ENCODE measurements at regions of chr9 and their contacts with region 1.

Region 1: DNA sequence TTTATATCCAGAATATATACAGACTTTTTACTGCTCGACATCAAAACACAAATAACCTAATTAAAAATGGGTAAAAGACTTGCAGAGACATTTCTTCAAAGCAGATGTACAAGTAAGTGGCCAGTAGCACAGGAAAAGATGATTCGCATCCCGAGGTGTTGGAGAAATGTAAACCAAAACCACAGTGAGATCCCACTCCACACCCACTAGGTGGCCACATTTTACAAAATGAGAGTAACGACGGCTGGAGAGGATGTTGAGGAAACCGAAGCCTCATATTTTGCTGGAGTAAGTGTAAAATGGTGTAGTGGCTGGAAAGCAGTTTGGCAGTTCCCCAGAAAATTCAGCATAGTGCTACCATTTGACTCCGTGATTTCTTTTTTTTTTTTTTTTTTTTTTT is 21.2 kb upstream of the GBGT1 start:
- DNase-seq: peak; percentile 77
- H3K4me3 ChIP-seq: peak overlapping the region in 1 of 2 experiments; percentile 25; a peak in 1 of 4 replicates
- H3K27ac ChIP-seq: no peak overlapping the region
- H3K4me1 ChIP-seq: no peaks in the 10 kb centered on the region
- H3K27me3 ChIP-seq: peaks cover 44% of the 10 kb centered on the region
- CTCF ChIP-seq: peak; percentile 63
- EP300 ChIP-seq: no peak
- RAD21 ChIP-seq: peak; percentile 84

Region 2: GRCh38 chr9:133119482-133120351 is 65.2 kb before region 1 on chr9:
- CTCF ChIA-PET with region 1: no interaction called
- POLR2A ChIA-PET with region 1: no interaction called
- DNase-seq: peak; percentile 90
- H3K4me3 ChIP-seq: peak overlapping the region; percentile 23 to 71; a peak in 3 of 4 replicates
- H3K27ac ChIP-seq: peak overlapping the region; percentile 32 to 99; a peak in 3 of 4 replicates
- H3K4me1 ChIP-seq: peaks cover 14 to 74% of the 10 kb centered on the region in 2 experiments
- H3K27me3 ChIP-seq: no peaks in the 10 kb centered on the region
- CTCF ChIP-seq: no peak
- EP300 ChIP-seq: peak in 1 of 2 experiments; percentile 43; a peak in 2 of 4 replicates
- RAD21 ChIP-seq: no peak

Region 3: DNA sequence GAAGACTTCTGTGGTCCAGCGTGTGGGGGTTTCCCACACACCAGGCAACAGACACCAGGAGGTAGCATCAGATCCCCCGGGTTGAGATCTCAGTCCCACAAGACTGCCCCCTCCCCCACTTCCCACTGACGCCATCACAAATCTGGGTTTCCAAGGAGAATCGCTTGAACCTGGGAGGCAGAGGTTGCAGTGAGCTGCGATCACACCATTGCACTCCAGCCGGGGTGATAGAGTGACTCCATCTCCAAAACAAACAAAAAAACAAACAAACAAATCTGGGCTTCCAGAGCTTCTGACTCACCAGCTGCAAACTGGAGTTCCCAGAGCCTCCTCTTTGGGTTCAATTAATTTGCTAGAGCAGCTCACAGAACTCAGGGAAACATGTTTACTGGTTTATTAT is 16.5 kb before region 1 on chr9:
- CTCF ChIA-PET with region 1: interaction called, 18 read pairs
- POLR2A ChIA-PET with region 1: no interaction called
- DNase-seq: no peak
- H3K4me3 ChIP-seq: no peak overlapping the region
- H3K27ac ChIP-seq: no peak overlapping the region
- H3K4me1 ChIP-seq: peaks cover 0 to 5% of the 10 kb centered on the region in 2 experiments; a peak in 1 of 4 replicates
- H3K27me3 ChIP-seq: peaks cover 4% of the 10 kb centered on the region; the same call in 1 of the 2 replicates
- CTCF ChIP-seq: no peak
- EP300 ChIP-seq: no peak
- RAD21 ChIP-seq: no peak

Region 4: GRCh38 chr9:133327834-133328484 is 143.0 kb after region 1 on chr9:
- CTCF ChIA-PET with region 1: interaction called, 47 read pairs
- POLR2A ChIA-PET with region 1: interaction called, 6 read pairs
- DNase-seq: no peak
- H3K4me3 ChIP-seq: no peak overlapping the region
- H3K27ac ChIP-seq: no peak overlapping the region
- H3K4me1 ChIP-seq: no peaks in the 10 kb centered on the region
- H3K27me3 ChIP-seq: no peaks in the 10 kb centered on the region
- CTCF ChIP-seq: no peak
- EP300 ChIP-seq: no peak
- RAD21 ChIP-seq: no peak

Region 5: DNA sequence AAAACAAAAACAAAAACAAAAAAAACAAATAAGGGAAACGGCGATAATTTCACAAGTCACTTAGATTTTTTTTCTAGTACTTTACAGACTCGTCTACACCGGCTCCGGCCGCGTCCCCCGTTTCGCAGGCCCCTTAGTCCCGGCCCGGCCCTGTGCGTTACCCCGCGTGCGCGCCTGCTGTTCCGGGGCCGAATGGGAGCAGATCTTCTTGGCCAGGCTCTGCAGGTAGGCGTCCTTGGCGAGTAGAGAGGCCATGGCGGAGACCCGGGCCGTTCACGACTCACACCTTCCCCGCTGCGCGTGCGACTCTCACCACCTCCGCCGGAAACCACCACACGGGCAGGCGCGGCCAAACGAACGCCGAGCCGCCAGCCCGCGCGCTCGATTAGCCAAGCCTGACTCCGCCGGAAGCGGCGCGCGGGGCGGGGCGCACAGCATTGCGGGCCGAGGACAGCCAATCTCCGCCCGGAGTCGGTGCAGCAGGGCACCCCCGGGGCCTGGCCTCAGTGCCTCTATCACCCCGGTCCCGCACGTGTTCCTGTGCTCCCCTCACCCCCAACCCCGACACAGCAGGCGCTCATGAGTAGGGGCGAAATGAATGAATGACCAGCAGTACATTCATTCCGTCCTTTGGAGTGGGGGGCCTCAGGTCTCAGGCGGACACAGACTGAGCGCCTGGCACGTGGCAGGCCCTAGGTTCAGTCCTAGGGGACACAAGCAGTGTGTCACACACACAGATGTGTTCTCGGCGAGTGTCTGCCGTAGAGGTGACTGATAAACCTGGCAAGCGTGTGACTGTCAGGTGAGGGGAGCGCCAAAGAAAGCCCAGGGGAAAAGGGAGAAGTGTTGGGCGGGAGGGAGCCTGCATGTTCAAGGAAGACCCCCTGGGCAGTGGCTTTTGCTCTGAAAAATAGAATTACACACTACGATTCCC is 151.2 kb after region 1 on chr9 and contains the start of gene SURF6:
- CTCF ChIA-PET with region 1: interaction called, 33 read pairs
- POLR2A ChIA-PET with region 1: interaction called, 3 read pairs
- DNase-seq: peak; percentile 96
- H3K4me3 ChIP-seq: peak within 1 kb of the TSS; percentile 70 to 100
- H3K27ac ChIP-seq: peak within 1 kb of the TSS; percentile 67 to 76
- H3K4me1 ChIP-seq: peaks cover 8 to 15% of the 10 kb centered on the region in 2 experiments; a peak in 1 of 4 replicates
- H3K27me3 ChIP-seq: no peaks in the 10 kb centered on the region
- CTCF ChIP-seq: no peak
- EP300 ChIP-seq: no peak
- RAD21 ChIP-seq: no peak
- polyA plus RNA-seq, gene SURF6: 42.1 and 44.5 TPM in 2 replicates

Measured in SK-N-SH (cell line).